Posterior vena cava (tissue), 2 donors: ENCODE measurements at regions of chr22 and their contacts with region 1.

Region 1: DNA sequence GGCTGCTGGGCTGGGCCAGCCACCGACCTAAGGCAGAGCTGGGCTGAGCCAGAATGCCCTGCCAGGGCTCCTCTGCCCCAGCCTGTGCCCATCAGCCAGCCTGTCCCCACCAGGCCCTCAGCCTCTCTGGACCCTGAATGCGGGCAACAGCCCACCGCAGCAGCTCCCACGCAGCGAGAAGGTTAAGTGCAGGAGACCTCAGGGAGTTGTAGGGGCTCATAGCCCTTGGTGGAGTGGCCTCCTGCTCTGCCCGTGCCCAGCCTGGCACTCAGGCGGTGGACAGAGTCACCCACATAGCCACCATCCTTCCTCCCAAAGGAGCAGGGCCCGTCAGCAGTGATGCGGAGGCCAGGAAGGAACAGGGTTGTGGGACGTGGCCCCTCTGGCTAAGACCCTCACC is 19.1 kb downstream of the WNT7B start:
- DNase-seq: no peak

Region 2: GRCh38 chr22:45296628-45297297 is 661.1 kb before region 1 on chr22:
- intact Hi-C with region 1: loop called in 1 of 2 experiments (anchors 5 kb)
- DNase-seq: no peak